ENCODE measurements at regions of chr1 and their contacts with region 1.

Region 1: DNA sequence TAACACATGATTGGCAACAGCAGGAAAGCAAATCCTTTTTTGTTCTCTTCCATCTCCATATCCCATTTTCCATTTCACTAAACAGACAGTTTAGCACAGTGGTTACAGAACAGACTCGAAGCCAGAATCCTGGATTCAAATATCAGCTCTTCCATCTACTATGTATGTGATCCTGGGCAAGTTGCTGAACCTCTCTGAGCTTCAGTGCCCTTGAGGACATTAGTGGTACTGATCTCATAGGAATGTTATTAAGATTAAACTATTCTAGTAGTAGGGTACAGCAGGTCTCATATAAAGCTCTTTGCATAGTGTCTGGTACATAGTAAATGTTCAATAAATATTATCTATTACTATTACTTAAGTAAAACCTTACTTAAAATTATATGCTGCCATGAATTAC is 13.8 kb upstream of the HHIPL2 start:
- DNase-seq: no peak
- H3K4me3 ChIP-seq: no peak overlapping the region
- H3K27ac ChIP-seq: no peak overlapping the region
- H3K4me1 ChIP-seq: no peaks in the 10 kb centered on the region
- H3K27me3 ChIP-seq: no peaks in the 10 kb centered on the region
- CTCF ChIP-seq: no peak

Region 2: GRCh38 chr1:222582099-222582774 is 20.6 kb after region 1 on chr1:
- CTCF ChIA-PET with region 1: no interaction called
- POLR2A ChIA-PET with region 1: no interaction called
- intact Hi-C with region 1: no loop called
- DNase-seq: peak; percentile 52
- H3K4me3 ChIP-seq: no peak overlapping the region
- H3K27ac ChIP-seq: peak overlapping the region; percentile 10
- H3K4me1 ChIP-seq: peaks cover 12% of the 10 kb centered on the region
- H3K27me3 ChIP-seq: no peaks in the 10 kb centered on the region
- CTCF ChIP-seq: no peak

Region 3: GRCh38 chr1:222654849-222655248 is 93.2 kb after region 1 on chr1:
- CTCF ChIA-PET with region 1: no interaction called
- POLR2A ChIA-PET with region 1: interaction called, 16 read pairs
- intact Hi-C with region 1: no loop called
- DNase-seq: peak; percentile 9
- H3K4me3 ChIP-seq: no peak overlapping the region
- H3K27ac ChIP-seq: no peak overlapping the region
- H3K4me1 ChIP-seq: peaks cover 11% of the 10 kb centered on the region
- H3K27me3 ChIP-seq: no peaks in the 10 kb centered on the region
- CTCF ChIP-seq: no peak

Measured in A673 (cell line).